GM12878 (cell line): ENCODE measurements at regions of chr12 and their contacts with region 1.

Region 1: GRCh38 chr12:49967042-49967776 is 5.5 kb downstream of the AQP5 start:
- DNase-seq: peak; percentile 15
- ATAC-seq: peak; percentile 94
- H3K4me3 ChIP-seq: no peak overlapping the region
- H3K27ac ChIP-seq: no peak overlapping the region
- H3K4me1 ChIP-seq: peaks cover 8% of the 10 kb centered on the region
- H3K27me3 ChIP-seq: peaks cover 5 to 6% of the 10 kb centered on the region in 2 experiments; a peak in 3 of 4 replicates
- CTCF ChIP-seq: peak; percentile 88 to 96 (median 95)
- EP300 ChIP-seq: no peak
- POLR2A ChIP-seq: no peak
- RAD21 ChIP-seq: peak; percentile 87

Region 2: DNA sequence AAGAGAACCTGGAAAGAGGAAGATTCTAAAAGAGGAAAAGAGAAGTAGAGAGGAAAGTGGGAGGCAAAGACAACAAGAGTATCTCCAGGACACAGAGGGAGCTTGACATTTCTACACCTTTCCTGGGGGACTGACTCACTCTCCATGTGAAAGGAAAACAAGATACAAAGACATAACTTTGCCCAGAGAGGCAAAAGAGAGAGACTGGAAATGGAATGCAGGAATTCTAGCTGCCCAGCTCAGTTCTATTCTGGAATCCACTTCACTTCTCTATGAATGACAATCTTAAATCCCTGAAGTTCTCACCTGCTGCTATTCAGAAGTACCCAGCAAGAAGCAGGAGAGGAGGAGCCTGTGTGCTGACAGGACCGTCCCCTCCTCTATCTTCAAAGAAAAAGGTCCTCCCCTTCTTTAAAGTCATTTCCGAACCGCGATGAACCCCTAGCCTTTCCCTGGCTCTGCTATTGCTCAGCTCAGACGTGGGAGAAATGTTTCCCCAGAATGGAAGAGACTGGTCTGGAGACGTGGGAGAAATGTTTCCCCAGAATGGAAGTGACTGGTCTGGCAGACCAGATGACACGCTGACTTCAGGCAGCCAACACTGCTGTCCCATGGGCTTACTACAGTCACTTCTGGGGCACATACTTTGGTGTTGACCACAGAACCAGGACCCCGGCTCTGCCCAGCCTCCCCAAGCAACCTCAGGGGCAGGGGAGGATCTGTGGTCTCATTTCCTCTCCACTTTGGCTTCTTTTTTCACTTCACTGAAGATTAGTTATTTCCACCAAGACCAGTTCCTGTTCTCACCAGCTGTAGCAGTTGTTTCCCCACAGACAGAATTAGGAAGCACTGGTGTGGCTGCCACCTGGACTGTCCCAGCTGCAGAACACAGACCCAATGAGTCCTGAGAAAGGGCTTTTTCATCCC is 268.3 kb before region 1 on chr12:
- CTCF ChIA-PET with region 1: no interaction called
- POLR2A ChIA-PET with region 1: no interaction called
- RAD21 ChIA-PET with region 1: no interaction called
- SMC1A ChIA-PET with region 1: no interaction called
- in situ Hi-C with region 1: no loop called
- intact Hi-C with region 1: no loop called
- DNase-seq: peak; percentile 91
- ATAC-seq: peak; percentile 79
- H3K4me3 ChIP-seq: peak overlapping the region; percentile 54
- H3K27ac ChIP-seq: peak overlapping the region; percentile 91
- H3K4me1 ChIP-seq: peaks cover 48% of the 10 kb centered on the region
- H3K27me3 ChIP-seq: no peaks in the 10 kb centered on the region
- CTCF ChIP-seq: no peak
- EP300 ChIP-seq: peak; percentile 53 to 60; a peak in 2 of 4 replicates
- POLR2A ChIP-seq: no peak
- RAD21 ChIP-seq: 0 out of 2 replicates have a peak, but pooled peaks have one; percentile 10

Region 3: GRCh38 chr12:49945394-49946080 is 21.7 kb before region 1 on chr12:
- CTCF ChIA-PET with region 1: interaction called, 35 read pairs
- POLR2A ChIA-PET with region 1: no interaction called
- RAD21 ChIA-PET with region 1: no interaction called
- SMC1A ChIA-PET with region 1: interaction called, 6 read pairs
- in situ Hi-C with region 1: no loop called
- intact Hi-C with region 1: no loop called
- DNase-seq: peak; percentile 45
- ATAC-seq: peak; percentile 100
- H3K4me3 ChIP-seq: no peak overlapping the region
- H3K27ac ChIP-seq: no peak overlapping the region
- H3K4me1 ChIP-seq: no peaks in the 10 kb centered on the region
- H3K27me3 ChIP-seq: no peaks in the 10 kb centered on the region; a peak in 1 of 4 replicates
- CTCF ChIP-seq: peak; percentile 85 to 93 (median 92)
- EP300 ChIP-seq: no peak
- POLR2A ChIP-seq: no peak
- RAD21 ChIP-seq: no peak

Region 4: DNA sequence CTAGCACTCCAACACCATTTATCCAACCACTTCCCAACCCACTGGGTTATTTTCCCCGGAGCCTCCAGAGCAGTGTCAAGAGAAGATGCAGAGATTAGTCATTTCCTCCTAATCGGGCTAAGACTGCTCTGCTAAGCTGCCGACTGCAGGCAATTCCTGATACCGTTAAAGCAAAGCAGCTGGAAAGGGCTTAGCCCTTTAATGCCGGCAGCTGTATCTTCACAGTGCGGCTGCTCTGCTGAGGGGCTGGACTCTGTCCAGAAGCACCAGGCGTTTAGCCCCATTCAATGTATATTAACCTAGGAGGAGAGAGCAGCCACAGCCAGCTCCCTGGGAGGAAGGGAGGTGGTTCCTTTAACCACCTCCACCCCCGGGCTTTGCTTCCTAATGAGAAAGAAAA is 16.7 kb after region 1 on chr12:
- CTCF ChIA-PET with region 1: interaction called, 68 read pairs
- POLR2A ChIA-PET with region 1: no interaction called
- RAD21 ChIA-PET with region 1: interaction called, 21 read pairs
- SMC1A ChIA-PET with region 1: interaction called, 3 read pairs
- in situ Hi-C with region 1: no loop called
- intact Hi-C with region 1: no loop called
- DNase-seq: no peak
- ATAC-seq: no peak
- H3K4me3 ChIP-seq: no peak overlapping the region
- H3K27ac ChIP-seq: no peak overlapping the region
- H3K4me1 ChIP-seq: no peaks in the 10 kb centered on the region
- H3K27me3 ChIP-seq: no peaks in the 10 kb centered on the region
- CTCF ChIP-seq: no peak
- EP300 ChIP-seq: no peak
- POLR2A ChIP-seq: no peak
- RAD21 ChIP-seq: no peak

Region 5: DNA sequence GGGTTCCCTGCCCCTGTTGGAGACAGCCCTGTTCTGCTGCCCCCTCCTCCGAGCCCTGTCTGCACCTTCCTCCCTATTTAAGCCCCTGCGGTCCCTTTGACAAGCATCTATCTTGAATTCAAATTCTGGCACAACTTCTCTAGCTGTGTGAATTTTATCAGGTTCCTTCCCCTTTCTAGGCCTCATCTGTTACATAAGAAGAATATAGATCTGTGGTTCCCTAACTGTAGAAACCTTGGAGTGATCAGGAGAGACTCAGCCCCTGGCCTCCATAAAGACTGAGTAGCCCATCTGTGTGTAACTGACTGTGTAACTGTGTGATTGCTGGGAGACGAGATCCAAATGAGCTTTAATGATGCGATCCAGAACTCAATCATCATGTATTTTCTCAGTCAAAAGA is 71.1 kb after region 1 on chr12:
- CTCF ChIA-PET with region 1: interaction called, 47 read pairs
- POLR2A ChIA-PET with region 1: no interaction called
- RAD21 ChIA-PET with region 1: interaction called, 5 read pairs
- SMC1A ChIA-PET with region 1: interaction called, 3 read pairs
- in situ Hi-C with region 1: no loop called
- intact Hi-C with region 1: loop called (anchors 1 kb)
- DNase-seq: no peak
- ATAC-seq: no peak
- H3K4me3 ChIP-seq: no peak overlapping the region
- H3K27ac ChIP-seq: no peak overlapping the region
- H3K4me1 ChIP-seq: no peaks in the 10 kb centered on the region
- H3K27me3 ChIP-seq: no peaks in the 10 kb centered on the region
- CTCF ChIP-seq: no peak
- EP300 ChIP-seq: no peak
- POLR2A ChIP-seq: no peak
- RAD21 ChIP-seq: no peak

Region 6: DNA sequence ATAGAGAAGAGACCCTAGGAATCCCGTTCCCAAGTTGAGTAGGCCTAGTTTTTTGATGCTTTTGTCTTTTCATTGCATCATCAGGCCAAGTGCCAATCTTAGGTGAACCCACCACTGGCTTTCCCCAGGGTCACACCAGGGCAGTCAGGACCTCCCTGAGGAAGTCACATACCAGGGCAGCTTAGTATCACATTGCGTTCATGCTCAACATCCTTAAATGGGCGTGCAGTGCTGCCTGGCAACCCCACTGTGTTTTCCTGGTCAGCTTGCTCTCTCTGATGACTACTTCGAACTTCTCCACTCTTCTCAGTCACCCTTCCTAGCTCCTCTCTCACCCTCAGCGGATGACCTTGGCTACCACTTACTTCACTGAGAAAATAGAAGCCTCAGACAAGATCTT is 99.2 kb after region 1 on chr12:
- CTCF ChIA-PET with region 1: interaction called, 121 read pairs
- POLR2A ChIA-PET with region 1: interaction called, 4 read pairs
- RAD21 ChIA-PET with region 1: interaction called, 74 read pairs
- SMC1A ChIA-PET with region 1: interaction called, 25 read pairs
- in situ Hi-C with region 1: loop called (anchors 5 kb)
- intact Hi-C with region 1: loop called (anchors 1 kb)
- DNase-seq: no peak
- ATAC-seq: peak; percentile 65
- H3K4me3 ChIP-seq: no peak overlapping the region
- H3K27ac ChIP-seq: no peak overlapping the region
- H3K4me1 ChIP-seq: no peaks in the 10 kb centered on the region
- H3K27me3 ChIP-seq: no peaks in the 10 kb centered on the region; a peak in 2 of 4 replicates
- CTCF ChIP-seq: no peak
- EP300 ChIP-seq: no peak
- POLR2A ChIP-seq: no peak
- RAD21 ChIP-seq: no peak